Cardiac septum (tissue), 1 donor: ENCODE measurements at regions of chr17 and their contacts with region 1.

Region 1: GRCh38 chr17:58517734-58518609 is 3.5 kb upstream of the MTMR4 start:
- DNase-seq: peak; percentile 100

Region 2: DNA sequence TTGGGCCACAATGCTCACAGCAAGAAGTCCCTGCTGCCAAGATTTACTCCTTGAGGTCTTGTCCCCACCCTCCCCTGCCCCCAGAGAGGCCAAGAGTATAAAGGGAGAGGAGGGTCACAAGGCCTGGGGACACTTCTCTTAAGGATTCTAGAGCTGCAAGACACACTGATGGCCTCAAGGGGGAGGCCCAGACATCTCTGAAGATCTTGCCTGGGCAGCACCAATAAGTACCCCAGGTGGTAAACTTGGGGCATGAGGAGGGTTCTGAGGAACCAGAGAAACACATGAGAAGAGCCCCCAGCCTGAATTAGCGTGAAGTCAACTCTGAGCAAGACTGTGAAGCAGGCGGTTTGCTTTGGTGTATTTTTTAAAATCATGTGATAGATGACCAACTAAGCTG is 23.3 kb after region 1 on chr17:
- intact Hi-C with region 1: no loop called
- DNase-seq: no peak

Region 3: DNA sequence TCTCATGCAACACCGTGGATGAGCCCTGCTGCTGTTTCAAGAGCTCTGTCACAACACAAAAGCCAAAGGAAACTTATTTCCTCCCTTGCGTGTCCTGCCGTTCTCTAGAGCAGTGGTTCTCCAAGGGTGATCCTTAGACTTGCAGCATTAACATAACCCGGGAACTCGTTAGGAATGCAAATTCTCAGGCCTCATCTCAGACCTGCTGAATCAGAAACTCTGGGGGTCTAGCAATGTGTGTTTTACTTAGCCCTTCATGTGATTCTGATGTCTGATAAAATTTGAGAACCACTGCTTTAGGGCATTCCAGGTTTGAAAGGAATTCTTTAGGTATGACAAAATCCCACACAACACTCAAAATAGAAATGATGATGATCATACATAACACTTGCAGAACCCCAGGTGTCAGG is 47.8 kb after region 1 on chr17:
- intact Hi-C with region 1: no loop called
- DNase-seq: no peak

Region 4: GRCh38 chr17:58587702-58588254 is 69.8 kb after region 1 on chr17:
- intact Hi-C with region 1: loop called (anchors 5 kb)
- DNase-seq: no peak

Region 5: DNA sequence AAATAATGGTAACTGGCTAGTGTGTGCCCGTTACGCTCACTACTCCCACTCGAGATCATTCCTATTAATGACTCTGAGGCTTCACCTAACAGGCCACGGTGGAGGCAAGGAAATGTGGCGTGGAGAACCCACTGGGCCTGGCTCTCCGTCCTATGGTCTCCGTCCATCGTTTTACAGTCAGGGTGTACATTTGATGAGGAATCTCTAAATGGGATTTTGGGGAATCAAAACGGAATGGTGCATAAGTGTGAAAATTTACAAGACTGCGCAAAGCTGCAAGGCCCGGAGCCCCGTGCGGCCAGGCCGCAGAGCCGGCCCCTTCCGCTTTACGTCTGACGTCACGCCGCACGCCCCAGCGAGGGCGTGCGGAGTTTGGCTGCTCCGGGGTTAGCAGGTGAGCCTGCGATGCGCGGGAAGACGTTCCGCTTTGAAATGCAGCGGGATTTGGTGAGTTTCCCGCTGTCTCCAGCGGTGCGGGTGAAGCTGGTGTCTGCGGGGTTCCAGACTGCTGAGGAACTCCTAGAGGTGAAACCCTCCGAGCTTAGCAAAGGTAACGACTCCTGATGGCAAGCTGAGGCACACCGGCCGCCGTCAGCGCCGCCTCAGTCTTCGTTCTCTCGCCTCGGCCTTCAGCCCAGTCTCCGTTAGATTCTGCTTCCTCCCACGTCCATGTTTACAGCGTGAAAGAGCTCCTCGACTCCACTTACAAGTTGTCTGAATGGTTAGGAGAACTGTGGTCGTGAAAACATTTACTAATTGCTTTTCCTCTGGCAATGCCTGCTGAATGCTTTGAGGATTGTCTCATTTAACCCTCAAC is 174.5 kb after region 1 on chr17 and contains the start of gene RAD51C:
- intact Hi-C with region 1: loop called (anchors 10 kb)
- DNase-seq: peak; percentile 93
- total RNA-seq, gene RAD51C: 29.2 TPM

Region 6: DNA sequence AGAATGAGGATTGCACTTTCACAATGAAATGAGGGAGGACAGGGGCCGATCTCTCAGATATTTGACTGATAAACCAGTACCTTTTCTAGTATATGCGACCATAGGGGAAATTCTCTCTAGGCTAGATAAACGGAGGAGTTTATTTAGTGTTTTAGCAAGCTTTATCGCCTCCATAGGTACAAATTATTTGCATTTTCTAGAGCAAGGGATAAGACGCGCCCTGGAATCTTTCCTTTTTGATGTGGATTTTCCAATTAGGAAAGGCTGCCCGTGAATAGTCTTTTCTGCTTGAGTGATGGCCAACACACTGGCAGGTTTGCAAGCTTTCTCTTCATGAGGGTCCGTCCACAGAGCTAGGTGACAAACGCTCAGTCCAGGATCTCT is 702.0 kb after region 1 on chr17:
- intact Hi-C with region 1: loop called (anchors 10 kb)
- DNase-seq: no peak